CD8-positive, alpha-beta T cell (primary cell): ENCODE measurements at regions of chr3 and their contacts with region 1.

Region 1: GRCh38 chr3:32467333-32468070 is 35.1 kb downstream of the CMTM6 start:
- DNase-seq: peak; percentile 65 to 91 (median 76)
- ATAC-seq: peak; percentile 90
- H3K4me3 ChIP-seq: peak overlapping the region; percentile 46 to 51
- H3K4me3 Mint-ChIP-seq: peak overlapping the region; percentile 71
- H3K27ac ChIP-seq: peak overlapping the region; percentile 32 to 47
- H3K27ac Mint-ChIP-seq: peak overlapping the region; percentile 87
- H3K4me1 ChIP-seq: peaks cover 22% of the 10 kb centered on the region
- H3K4me1 Mint-ChIP-seq: peaks cover 47% of the 10 kb centered on the region
- H3K27me3 ChIP-seq: no peaks in the 10 kb centered on the region
- H3K27me3 Mint-ChIP-seq: no peaks in the 10 kb centered on the region
- CTCF ChIP-seq: peak; percentile 98

Region 2: GRCh38 chr3:32303977-32304881 is 163.3 kb before region 1 on chr3:
- CTCF ChIA-PET with region 1: interaction called, 47 read pairs
- POLR2A ChIA-PET with region 1: no interaction called
- intact Hi-C with region 1: no loop called
- DNase-seq: no peak
- ATAC-seq: no peak
- H3K4me3 ChIP-seq: no peak overlapping the region
- H3K4me3 Mint-ChIP-seq: no peak overlapping the region
- H3K27ac ChIP-seq: no peak overlapping the region
- H3K27ac Mint-ChIP-seq: peak overlapping the region; percentile 49
- H3K4me1 ChIP-seq: peaks cover 25% of the 10 kb centered on the region
- H3K4me1 Mint-ChIP-seq: peaks cover 29% of the 10 kb centered on the region
- H3K27me3 ChIP-seq: no peaks in the 10 kb centered on the region
- H3K27me3 Mint-ChIP-seq: no peaks in the 10 kb centered on the region
- CTCF ChIP-seq: no peak

Region 3: GRCh38 chr3:32384938-32385337 is 82.6 kb before region 1 on chr3:
- CTCF ChIA-PET with region 1: interaction called, 64 read pairs
- POLR2A ChIA-PET with region 1: interaction called, 3 read pairs
- intact Hi-C with region 1: no loop called
- DNase-seq: no peak
- ATAC-seq: no peak
- H3K4me3 ChIP-seq: no peak overlapping the region
- H3K4me3 Mint-ChIP-seq: no peak overlapping the region
- H3K27ac ChIP-seq: no peak overlapping the region
- H3K27ac Mint-ChIP-seq: no peak overlapping the region
- H3K4me1 ChIP-seq: no peaks in the 10 kb centered on the region
- H3K4me1 Mint-ChIP-seq: peaks cover 13% of the 10 kb centered on the region
- H3K27me3 ChIP-seq: no peaks in the 10 kb centered on the region
- H3K27me3 Mint-ChIP-seq: no peaks in the 10 kb centered on the region
- CTCF ChIP-seq: no peak

Region 4: GRCh38 chr3:32414520-32415202 is 52.8 kb before region 1 on chr3:
- CTCF ChIA-PET with region 1: interaction called, 33 read pairs
- POLR2A ChIA-PET with region 1: no interaction called
- intact Hi-C with region 1: no loop called
- DNase-seq: peak in 7 of 9 experiments; percentile 26 to 80 (median 63)
- ATAC-seq: peak; percentile 94
- H3K4me3 ChIP-seq: no peak overlapping the region
- H3K4me3 Mint-ChIP-seq: peak overlapping the region; percentile 55
- H3K27ac ChIP-seq: peak overlapping the region; percentile 57 to 80
- H3K27ac Mint-ChIP-seq: peak overlapping the region; percentile 97
- H3K4me1 ChIP-seq: peaks cover 56% of the 10 kb centered on the region
- H3K4me1 Mint-ChIP-seq: peaks cover 81% of the 10 kb centered on the region
- H3K27me3 ChIP-seq: no peaks in the 10 kb centered on the region
- H3K27me3 Mint-ChIP-seq: no peaks in the 10 kb centered on the region
- CTCF ChIP-seq: no peak

Region 5: GRCh38 chr3:32438596-32439344 is 28.7 kb before region 1 on chr3:
- CTCF ChIA-PET with region 1: interaction called, 20 read pairs
- POLR2A ChIA-PET with region 1: no interaction called
- intact Hi-C with region 1: loop called in 1 of 2 experiments (anchors 5 kb)
- DNase-seq: peak in 4 of 9 experiments; percentile 10 to 49 (median 35)
- ATAC-seq: peak; percentile 56
- H3K4me3 ChIP-seq: no peak overlapping the region
- H3K4me3 Mint-ChIP-seq: peak overlapping the region; percentile 46
- H3K27ac ChIP-seq: peak overlapping the region in 1 of 2 experiments; percentile 31
- H3K27ac Mint-ChIP-seq: peak overlapping the region; percentile 85
- H3K4me1 ChIP-seq: peaks cover 53% of the 10 kb centered on the region
- H3K4me1 Mint-ChIP-seq: peaks cover 75% of the 10 kb centered on the region
- H3K27me3 ChIP-seq: no peaks in the 10 kb centered on the region
- H3K27me3 Mint-ChIP-seq: no peaks in the 10 kb centered on the region
- CTCF ChIP-seq: no peak

Region 6: DNA sequence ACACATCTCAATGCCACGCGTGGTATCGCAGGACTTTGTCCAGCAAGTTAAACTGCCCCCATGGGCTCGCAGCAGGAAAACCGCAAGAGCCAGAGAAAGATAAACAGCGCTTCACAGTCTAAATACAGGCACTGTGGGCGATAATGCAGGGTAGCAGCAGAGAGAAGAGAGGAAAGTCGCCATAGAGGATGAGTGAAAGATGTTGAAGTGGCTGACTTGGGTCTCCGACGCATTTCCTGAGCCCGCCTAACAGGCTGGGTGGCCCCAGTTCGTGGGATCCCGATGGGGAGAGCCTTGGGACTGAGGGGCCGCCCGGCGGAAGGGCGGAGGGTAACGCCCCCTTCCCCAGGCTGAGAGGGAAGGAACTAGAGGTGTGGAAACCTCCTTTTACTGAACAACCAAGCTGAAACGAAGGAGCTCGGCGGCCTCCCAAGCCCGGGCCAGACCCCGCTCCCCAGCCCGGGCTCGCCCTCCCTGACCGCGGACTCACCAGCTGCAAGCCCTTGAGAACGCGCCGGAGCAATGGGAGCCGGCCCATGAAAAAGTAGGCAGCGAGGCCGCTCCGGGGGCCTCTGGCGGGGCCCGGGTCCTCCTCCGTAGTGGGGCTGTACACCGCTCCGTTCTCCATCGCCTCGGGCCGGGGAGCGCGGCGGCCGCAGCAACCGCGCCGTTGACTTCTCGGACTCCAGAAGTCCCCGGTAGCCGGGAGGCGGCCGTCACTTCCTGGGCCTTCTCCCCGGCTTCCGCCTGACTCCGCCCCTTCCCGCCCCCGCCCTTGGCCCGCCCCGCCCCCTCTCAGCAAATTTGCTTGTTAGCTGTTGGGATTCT is 34.8 kb after region 1 on chr3 and contains the start of gene CMTM6:
- CTCF ChIA-PET with region 1: interaction called, 13 read pairs
- POLR2A ChIA-PET with region 1: no interaction called
- intact Hi-C with region 1: no loop called
- DNase-seq: peak; percentile 37 to 89 (median 75)
- ATAC-seq: peak; percentile 79
- H3K4me3 ChIP-seq: peak within 1 kb of the TSS; percentile 76 to 86
- H3K4me3 Mint-ChIP-seq: peak within 1 kb of the TSS; percentile 88
- H3K27ac ChIP-seq: peak within 1 kb of the TSS; percentile 94 to 95
- H3K27ac Mint-ChIP-seq: peak within 1 kb of the TSS; percentile 91
- H3K4me1 ChIP-seq: peaks cover 18% of the 10 kb centered on the region
- H3K4me1 Mint-ChIP-seq: peaks cover 32% of the 10 kb centered on the region
- H3K27me3 ChIP-seq: no peaks in the 10 kb centered on the region
- H3K27me3 Mint-ChIP-seq: no peaks in the 10 kb centered on the region
- CTCF ChIP-seq: no peak
- total RNA-seq, gene CMTM6: 34.7 to 35.0 TPM